Ascending aorta (tissue), 2 donors: ENCODE measurements at regions of chr5 and their contacts with region 1.

Region 1: GRCh38 chr5:114449860-114450421 is 88.1 kb downstream of the KCNN2 start:
- DNase-seq: peak in 1 of 2 donors; percentile 76
- H3K4me3 ChIP-seq: no peak overlapping the region
- H3K27ac ChIP-seq: peak overlapping the region in 1 of 2 donors; percentile 33
- H3K4me1 ChIP-seq: no peaks in the 10 kb centered on the region
- H3K27me3 ChIP-seq: no peaks in the 10 kb centered on the region
- CTCF ChIP-seq: peak; percentile 49 to 78 (median 61)

Region 2: GRCh38 chr5:113612060-113612496 is 837.9 kb before region 1 on chr5:
- intact Hi-C with region 1: loop called (anchors 1 kb)
- DNase-seq: no peak
- H3K4me3 ChIP-seq: no peak overlapping the region
- H3K27ac ChIP-seq: no peak overlapping the region
- H3K4me1 ChIP-seq: no peaks in the 10 kb centered on the region
- H3K27me3 ChIP-seq: no peaks in the 10 kb centered on the region
- CTCF ChIP-seq: peak; percentile 30 to 65 (median 54)

Region 3: GRCh38 chr5:113678924-113679575 is 770.9 kb before region 1 on chr5:
- intact Hi-C with region 1: loop called (anchors 1 kb)
- DNase-seq: no peak
- H3K4me3 ChIP-seq: no peak overlapping the region
- H3K27ac ChIP-seq: no peak overlapping the region
- H3K4me1 ChIP-seq: no peaks in the 10 kb centered on the region
- H3K27me3 ChIP-seq: no peaks in the 10 kb centered on the region
- CTCF ChIP-seq: peak; percentile 10 to 57 (median 47)

Region 4: GRCh38 chr5:113806250-113806649 is 643.7 kb before region 1 on chr5:
- intact Hi-C with region 1: loop called (anchors 5 kb)
- DNase-seq: no peak
- H3K4me3 ChIP-seq: peak overlapping the region in 1 of 2 donors; percentile 47
- H3K27ac ChIP-seq: peak overlapping the region; percentile 61 to 73
- H3K4me1 ChIP-seq: peaks cover 0 to 6% of the 10 kb centered on the region in 2 donors
- H3K27me3 ChIP-seq: no peaks in the 10 kb centered on the region
- CTCF ChIP-seq: peak in 2 of 3 experiments; percentile 40 to 62